ENCODE measurements at regions of chr21 and their contacts with region 1.

Region 1: DNA sequence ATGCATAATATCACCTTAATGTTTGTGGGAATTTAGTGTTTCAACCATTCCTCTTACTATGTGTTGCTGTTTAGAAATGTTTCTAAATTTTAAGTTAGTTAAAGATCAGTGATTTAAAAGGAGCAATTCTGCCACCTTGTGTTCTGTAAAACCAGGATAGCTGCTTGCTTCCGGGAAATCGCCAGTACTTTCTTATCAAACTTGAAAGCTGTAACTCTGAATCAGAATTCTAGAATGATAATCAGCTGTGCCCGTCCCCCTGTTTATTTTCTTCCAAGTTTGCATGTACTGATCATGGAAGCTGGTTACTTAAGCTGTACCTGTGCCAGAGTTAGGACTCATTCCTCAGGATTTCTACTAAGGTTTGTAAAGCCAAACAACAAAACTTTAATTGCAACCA is 656.4 kb downstream of the LTN1 start:
- DNase-seq: no peak
- ATAC-seq: peak in 3 of 4 donors; percentile 38 to 69 (median 43)
- H3K4me3 ChIP-seq: no peak overlapping the region
- H3K27ac ChIP-seq: no peak overlapping the region
- H3K4me1 ChIP-seq: peaks cover 5% of the 10 kb centered on the region
- H3K27me3 ChIP-seq: no peaks in the 10 kb centered on the region
- CTCF ChIP-seq: peak; percentile 61

Region 2: GRCh38 chr21:27564684-27565301 is 771.5 kb before region 1 on chr21:
- intact Hi-C with region 1: loop called in 1 of 2 experiments (anchors 5 kb)
- DNase-seq: peak in 1 of 2 donors; percentile 26
- ATAC-seq: peak; percentile 62 to 86 (median 76)
- H3K4me3 ChIP-seq: no peak overlapping the region
- H3K27ac ChIP-seq: no peak overlapping the region
- H3K4me1 ChIP-seq: peaks cover 9% of the 10 kb centered on the region
- H3K27me3 ChIP-seq: no peaks in the 10 kb centered on the region
- CTCF ChIP-seq: peak; percentile 70

Region 3: DNA sequence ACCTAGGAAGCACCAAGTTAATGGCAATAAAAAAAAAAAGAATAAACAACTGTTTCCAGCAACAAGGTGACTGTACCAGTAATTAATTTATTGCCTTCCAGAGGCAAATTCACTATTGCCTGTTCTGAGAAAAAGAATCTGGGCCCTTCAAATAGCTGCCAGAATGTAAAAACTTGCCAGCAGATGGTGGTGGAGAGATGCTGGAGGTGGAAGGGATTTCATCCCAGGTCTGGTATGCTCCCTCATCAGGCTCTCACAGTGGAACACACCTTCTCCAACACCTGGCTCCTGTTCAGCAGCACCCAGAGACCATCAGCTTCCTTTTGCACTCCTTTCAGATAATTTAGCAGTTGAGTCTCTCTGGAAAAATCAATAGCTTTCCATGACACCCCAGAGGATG is 576.5 kb before region 1 on chr21:
- intact Hi-C with region 1: loop called in 1 of 2 experiments (anchors 5 kb)
- DNase-seq: no peak
- ATAC-seq: no peak
- H3K4me3 ChIP-seq: no peak overlapping the region
- H3K27ac ChIP-seq: no peak overlapping the region
- H3K4me1 ChIP-seq: peaks cover 6% of the 10 kb centered on the region
- H3K27me3 ChIP-seq: no peaks in the 10 kb centered on the region
- CTCF ChIP-seq: no peak

Region 4: DNA sequence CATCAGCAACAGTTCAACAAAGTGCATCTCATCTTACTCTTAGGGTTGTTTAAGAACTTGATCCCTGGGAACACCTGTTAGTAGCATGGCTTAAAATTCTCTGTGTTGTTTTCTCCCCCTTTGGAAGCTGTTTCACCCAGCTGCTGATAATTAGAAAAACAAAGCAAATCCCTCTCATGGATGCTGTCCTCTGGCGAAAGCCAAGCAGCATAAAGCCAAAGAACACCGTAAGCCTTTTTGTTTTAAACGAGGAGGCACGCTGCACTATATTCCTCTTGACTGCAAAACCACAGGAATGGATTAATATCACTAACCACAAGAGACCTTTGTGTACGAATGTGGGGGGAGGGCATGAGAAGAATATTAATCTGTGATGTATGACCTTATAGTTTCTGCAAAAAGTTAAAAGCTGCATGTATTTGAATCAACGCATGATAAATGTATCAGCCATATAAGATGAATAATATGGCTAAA is 266.8 kb before region 1 on chr21:
- intact Hi-C with region 1: loop called (anchors 5 to 10 kb)
- DNase-seq: no peak
- ATAC-seq: peak; percentile 59 to 73 (median 68)
- H3K4me3 ChIP-seq: peak overlapping the region; percentile 69
- H3K27ac ChIP-seq: peak overlapping the region; percentile 87
- H3K4me1 ChIP-seq: peaks cover 17% of the 10 kb centered on the region
- H3K27me3 ChIP-seq: no peaks in the 10 kb centered on the region
- CTCF ChIP-seq: no peak

Region 5: GRCh38 chr21:28272272-28272992 is 63.9 kb before region 1 on chr21:
- intact Hi-C with region 1: no loop called
- DNase-seq: no peak
- ATAC-seq: no peak
- H3K4me3 ChIP-seq: no peak overlapping the region
- H3K27ac ChIP-seq: no peak overlapping the region
- H3K4me1 ChIP-seq: no peaks in the 10 kb centered on the region
- H3K27me3 ChIP-seq: no peaks in the 10 kb centered on the region
- CTCF ChIP-seq: no peak

Region 6: GRCh38 chr21:28537371-28538079 is 201.2 kb after region 1 on chr21:
- intact Hi-C with region 1: no loop called
- DNase-seq: no peak
- ATAC-seq: no peak
- H3K4me3 ChIP-seq: no peak overlapping the region
- H3K27ac ChIP-seq: no peak overlapping the region
- H3K4me1 ChIP-seq: no peaks in the 10 kb centered on the region
- H3K27me3 ChIP-seq: no peaks in the 10 kb centered on the region
- CTCF ChIP-seq: no peak

Measured in psoas muscle (tissue), 8 donors.